ENCODE measurements at regions of chr6 and their contacts with region 1.

Region 1: DNA sequence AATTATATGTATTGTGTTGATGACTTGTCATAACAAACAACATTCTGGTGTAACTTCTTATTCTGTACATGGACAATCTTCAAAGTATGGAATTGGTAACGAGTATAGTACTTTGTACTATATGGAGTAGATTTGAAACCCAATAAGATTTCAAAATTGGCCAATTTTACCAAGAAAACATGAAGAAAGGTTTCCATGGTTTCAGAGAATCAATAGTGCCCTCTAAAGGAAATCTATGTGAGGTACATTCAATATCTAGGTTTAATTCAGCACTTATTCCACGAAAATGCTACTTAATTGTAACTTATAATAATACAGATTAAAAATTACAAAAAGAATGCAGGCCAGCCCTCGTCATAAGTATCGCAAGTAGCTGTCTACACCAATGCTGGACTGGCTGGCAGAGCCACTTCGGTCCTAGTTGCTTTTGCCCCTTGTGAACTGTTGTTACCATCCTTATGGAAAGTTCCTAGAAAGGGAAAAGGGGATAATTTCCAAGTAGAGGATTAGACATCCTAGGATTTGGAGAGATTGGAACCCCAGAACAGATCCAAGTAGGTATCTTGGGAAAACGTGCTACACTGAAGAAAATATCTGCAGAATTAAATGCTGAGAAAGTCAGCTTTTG is 70.9 kb downstream of the LCA5 start:
- DNase-seq: no peak
- H3K4me3 ChIP-seq: no peak overlapping the region
- H3K27ac ChIP-seq: no peak overlapping the region
- H3K4me1 ChIP-seq: no peaks in the 10 kb centered on the region
- H3K27me3 ChIP-seq: no peaks in the 10 kb centered on the region
- CTCF ChIP-seq: peak; percentile 1 to 38 (median 14)
- POLR2A ChIP-seq: no peak

Region 2: DNA sequence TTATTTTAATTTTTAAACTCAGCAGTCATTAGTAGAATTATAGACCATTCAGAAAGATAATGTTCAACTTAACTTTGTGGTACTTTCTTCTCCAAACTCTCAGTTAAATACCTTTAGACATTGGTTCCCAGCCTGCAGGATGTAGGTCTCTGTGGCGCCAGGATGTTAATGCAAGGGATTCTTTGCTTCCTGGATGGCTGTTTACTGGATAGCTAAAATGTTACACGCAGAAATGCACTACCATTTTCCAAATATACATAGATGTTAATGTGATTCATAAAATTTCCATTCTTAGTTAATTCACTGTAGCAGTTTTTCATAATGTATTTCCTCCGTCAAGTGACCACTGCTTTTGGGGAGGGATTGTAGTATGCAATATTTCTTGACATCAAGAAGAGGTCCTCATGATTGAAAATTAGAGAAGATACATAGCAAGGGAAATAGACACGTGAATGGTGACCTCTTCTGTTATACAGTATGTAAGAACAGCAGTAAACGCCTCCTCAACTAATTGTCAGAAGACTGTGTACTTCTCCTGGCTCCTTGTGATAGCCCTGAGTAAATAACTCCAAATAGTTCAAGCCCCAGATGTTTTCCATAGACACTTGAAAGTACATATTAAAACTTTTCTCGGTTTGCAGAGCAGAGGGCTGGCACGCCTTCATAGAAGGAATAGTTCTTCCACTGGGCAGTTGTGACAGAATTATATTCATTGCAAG is 57.9 kb before region 1 on chr6:
- intact Hi-C with region 1: loop called (anchors 2 kb)
- DNase-seq: no peak
- H3K4me3 ChIP-seq: no peak overlapping the region
- H3K27ac ChIP-seq: no peak overlapping the region
- H3K4me1 ChIP-seq: no peaks in the 10 kb centered on the region
- H3K27me3 ChIP-seq: no peaks in the 10 kb centered on the region
- CTCF ChIP-seq: no peak
- POLR2A ChIP-seq: no peak

Region 3: DNA sequence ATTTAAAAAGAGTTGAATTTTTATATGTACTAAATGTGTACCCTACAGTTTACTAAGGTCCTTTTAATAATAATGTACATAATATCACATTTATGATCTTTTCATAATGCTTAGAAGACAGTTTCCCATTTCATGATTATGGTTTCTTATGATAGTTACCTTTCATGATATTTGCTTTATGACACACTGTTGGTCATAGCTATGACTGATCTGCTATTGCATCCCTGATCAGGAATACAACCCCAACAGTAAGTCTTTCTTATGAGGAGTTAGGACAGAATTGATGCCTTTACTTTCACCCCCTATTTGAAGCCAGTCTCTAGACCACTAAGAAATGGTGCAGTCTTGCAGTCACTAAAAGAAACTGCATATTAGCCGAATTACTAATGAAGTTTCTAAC is 39.9 kb after region 1 on chr6:
- intact Hi-C with region 1: no loop called
- DNase-seq: no peak
- H3K4me3 ChIP-seq: no peak overlapping the region
- H3K27ac ChIP-seq: no peak overlapping the region
- H3K4me1 ChIP-seq: no peaks in the 10 kb centered on the region
- H3K27me3 ChIP-seq: no peaks in the 10 kb centered on the region
- CTCF ChIP-seq: no peak
- POLR2A ChIP-seq: no peak

Measured in vagina (tissue), 2 donors.